ENCODE measurements at regions of chr6 and their contacts with region 1.

Region 1: GRCh38 chr6:93423542-93423941 is 4.2 kb upstream of the EPHA7 start:
- DNase-seq: no peak
- CTCF ChIP-seq: peak; percentile 46

Region 2: DNA sequence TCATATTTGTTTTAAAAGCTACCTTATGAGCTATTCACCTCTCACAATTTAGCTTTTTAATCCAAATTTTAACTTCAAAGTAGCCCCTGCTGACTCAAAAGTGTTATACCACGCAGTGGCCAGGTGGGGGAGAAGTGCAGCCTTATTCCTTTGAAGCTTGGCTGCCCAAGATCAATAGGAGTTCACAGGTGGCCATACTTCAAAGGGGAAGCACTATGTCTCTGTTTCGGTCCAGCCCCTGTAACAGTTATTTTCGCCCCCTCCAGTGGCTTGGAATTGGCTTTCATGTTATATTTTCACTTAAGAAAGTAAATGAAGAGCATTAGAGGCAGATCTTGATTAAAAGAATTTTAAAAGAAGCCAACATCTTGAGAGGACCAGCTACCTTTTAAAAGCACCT is 612.6 kb before region 1 on chr6:
- CTCF ChIA-PET with region 1: interaction called, 10 read pairs
- POLR2A ChIA-PET with region 1: no interaction called
- DNase-seq: peak; percentile 58
- CTCF ChIP-seq: peak; percentile 59

Region 3: DNA sequence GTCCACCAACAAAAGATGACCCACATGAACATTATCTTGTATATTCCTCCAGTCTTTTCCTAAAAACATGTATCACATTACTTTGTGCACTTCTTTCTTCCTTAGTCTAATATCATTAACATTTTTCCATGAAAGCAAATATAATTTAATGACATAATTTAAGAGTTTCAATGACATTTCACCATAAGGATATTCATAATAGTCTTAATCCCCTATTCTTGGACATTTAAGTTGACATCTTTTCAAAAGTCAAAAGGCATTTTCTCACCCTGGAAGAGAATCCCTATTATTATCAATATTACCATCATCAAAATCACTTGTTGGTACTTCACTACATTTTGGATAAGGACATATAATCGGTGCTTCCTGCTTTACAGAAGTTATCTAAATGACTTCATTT is 35.5 kb before region 1 on chr6:
- CTCF ChIA-PET with region 1: no interaction called
- POLR2A ChIA-PET with region 1: no interaction called
- DNase-seq: no peak
- CTCF ChIP-seq: no peak

Region 4: GRCh38 chr6:93412452-93412851 is 11.1 kb before region 1 on chr6:
- CTCF ChIA-PET with region 1: interaction called, 12 read pairs
- POLR2A ChIA-PET with region 1: no interaction called
- DNase-seq: no peak
- CTCF ChIP-seq: no peak

Region 5: GRCh38 chr6:93829009-93829408 is 405.5 kb after region 1 on chr6:
- CTCF ChIA-PET with region 1: no interaction called
- POLR2A ChIA-PET with region 1: no interaction called
- DNase-seq: no peak
- CTCF ChIP-seq: no peak